ENCODE measurements at regions of chr7 and their contacts with region 1.

Region 1: DNA sequence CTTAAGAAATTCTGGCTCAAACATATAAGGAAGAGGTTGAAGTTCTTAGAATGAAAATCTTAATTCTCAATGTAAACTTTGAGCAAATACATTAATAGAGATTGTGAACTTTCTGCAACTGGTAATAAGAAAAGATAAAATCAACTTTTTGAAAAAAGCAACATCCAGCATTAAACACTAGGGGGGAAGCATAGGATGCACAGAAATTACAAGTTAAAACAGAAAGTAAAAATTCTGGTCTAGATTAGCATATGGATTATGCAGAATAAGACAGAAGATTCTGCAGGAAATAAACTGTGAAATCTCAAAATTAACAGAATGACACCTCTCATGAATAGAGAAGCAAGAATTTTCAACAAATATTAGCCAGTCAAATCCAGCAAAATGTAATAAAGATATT is 38.0 kb upstream of the CAV2 start:
- DNase-seq: peak; percentile 24
- ATAC-seq: peak; percentile 37
- H3K4me3 ChIP-seq: peak overlapping the region; percentile 39; the same call in 1 of the 2 replicates
- H3K27ac ChIP-seq: peak overlapping the region; percentile 38
- H3K4me1 ChIP-seq: peaks cover 38% of the 10 kb centered on the region
- H3K27me3 ChIP-seq: no peaks in the 10 kb centered on the region
- CTCF ChIP-seq: peak; percentile 38; the same call in 1 of the 2 replicates

Region 2: GRCh38 chr7:116499168-116500077 is 37.9 kb after region 1 on chr7 and contains the start of gene CAV2:
- CTCF ChIA-PET with region 1: no interaction called
- POLR2A ChIA-PET with region 1: interaction called, 5 read pairs
- intact Hi-C with region 1: loop called (anchors 2 kb)
- DNase-seq: peak; percentile 92
- ATAC-seq: peak; percentile 79
- H3K4me3 ChIP-seq: peak within 1 kb of the TSS; percentile 89
- H3K27ac ChIP-seq: peak within 1 kb of the TSS; percentile 79
- H3K4me1 ChIP-seq: peaks cover 37% of the 10 kb centered on the region
- H3K27me3 ChIP-seq: no peaks in the 10 kb centered on the region
- CTCF ChIP-seq: no peak
- total RNA-seq, gene CAV2: 76.6 and 84.4 TPM in 2 replicates

Region 3: DNA sequence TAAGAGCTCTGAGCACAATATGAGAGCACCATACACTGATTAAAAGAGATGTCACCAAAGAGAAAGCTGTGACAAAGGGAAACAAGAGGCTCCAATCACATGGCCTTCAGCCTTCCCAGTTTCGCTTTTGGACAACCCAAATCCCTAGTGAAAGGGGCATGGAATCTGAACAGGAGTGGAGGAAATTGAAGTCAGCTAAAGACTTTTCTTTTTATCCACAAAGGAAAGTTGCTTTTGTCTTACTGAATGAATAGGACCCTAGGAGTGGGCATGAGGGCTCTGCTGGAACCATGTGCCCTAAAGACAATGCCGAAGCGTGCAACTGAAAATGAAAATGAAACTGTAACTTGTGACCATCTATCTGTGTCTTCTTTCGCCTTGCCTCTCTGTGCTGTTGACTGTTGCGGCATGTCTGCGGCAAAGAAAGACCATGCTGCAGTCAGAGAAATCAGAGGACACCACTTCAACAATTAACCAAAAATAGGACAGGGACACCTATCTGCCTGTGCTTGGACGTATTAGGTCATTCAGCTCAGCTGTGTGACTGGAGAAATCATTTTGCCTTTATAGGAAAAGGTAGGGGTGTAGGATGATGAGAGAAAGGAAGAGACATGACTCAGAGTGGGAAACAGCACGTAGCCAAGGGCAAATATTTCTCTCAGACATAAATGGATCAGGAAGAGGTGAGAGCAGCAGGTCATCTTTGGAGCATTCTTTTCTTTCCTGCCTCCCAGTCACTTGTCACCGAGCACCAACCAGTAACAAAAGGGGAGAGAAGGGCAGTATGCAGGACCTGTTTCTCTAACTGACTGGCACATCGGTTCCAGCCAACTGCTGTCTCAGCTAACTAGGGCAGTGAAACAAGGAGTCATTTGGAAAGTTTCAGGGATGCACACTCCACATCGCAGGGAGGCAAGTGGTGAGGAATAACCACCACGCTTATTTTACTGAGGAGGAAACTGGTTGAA is 50.3 kb after region 1 on chr7:
- CTCF ChIA-PET with region 1: no interaction called
- POLR2A ChIA-PET with region 1: interaction called, 10 read pairs
- intact Hi-C with region 1: no loop called
- DNase-seq: peak; percentile 93
- ATAC-seq: peak; percentile 83
- H3K4me3 ChIP-seq: peak overlapping the region; percentile 56
- H3K27ac ChIP-seq: peak overlapping the region; percentile 79
- H3K4me1 ChIP-seq: peaks cover 34% of the 10 kb centered on the region
- H3K27me3 ChIP-seq: no peaks in the 10 kb centered on the region
- CTCF ChIP-seq: no peak

Region 4: GRCh38 chr7:116762971-116763370 is 301.5 kb after region 1 on chr7:
- CTCF ChIA-PET with region 1: no interaction called
- POLR2A ChIA-PET with region 1: no interaction called
- intact Hi-C with region 1: no loop called
- DNase-seq: no peak
- ATAC-seq: no peak
- H3K4me3 ChIP-seq: no peak overlapping the region
- H3K27ac ChIP-seq: no peak overlapping the region
- H3K4me1 ChIP-seq: no peaks in the 10 kb centered on the region
- H3K27me3 ChIP-seq: no peaks in the 10 kb centered on the region
- CTCF ChIP-seq: no peak

Measured in PC-3 (cell line).